ENCODE measurements at regions of chr3 and their contacts with region 1.

Region 1: GRCh38 chr3:194333212-194333980 is 17.7 kb downstream of the CPN2 start:
- DNase-seq: peak; percentile 92
- H3K4me3 Mint-ChIP-seq: peak overlapping the region; percentile 65
- H3K27ac Mint-ChIP-seq: no peak overlapping the region
- H3K4me1 Mint-ChIP-seq: peaks cover 5% of the 10 kb centered on the region
- H3K27me3 Mint-ChIP-seq: peaks cover 25% of the 10 kb centered on the region

Region 2: GRCh38 chr3:193897288-193897687 is 436.1 kb before region 1 on chr3:
- CTCF ChIA-PET with region 1: no interaction called
- POLR2A ChIA-PET with region 1: no interaction called
- intact Hi-C with region 1: no loop called
- DNase-seq: no peak
- H3K4me3 Mint-ChIP-seq: no peak overlapping the region
- H3K27ac Mint-ChIP-seq: no peak overlapping the region
- H3K4me1 Mint-ChIP-seq: no peaks in the 10 kb centered on the region
- H3K27me3 Mint-ChIP-seq: peaks cover 1% of the 10 kb centered on the region

Region 3: GRCh38 chr3:194224471-194225415 is 108.7 kb before region 1 on chr3:
- CTCF ChIA-PET with region 1: no interaction called
- POLR2A ChIA-PET with region 1: no interaction called
- intact Hi-C with region 1: no loop called
- DNase-seq: no peak
- H3K4me3 Mint-ChIP-seq: no peak overlapping the region
- H3K27ac Mint-ChIP-seq: no peak overlapping the region
- H3K4me1 Mint-ChIP-seq: peaks cover 7% of the 10 kb centered on the region
- H3K27me3 Mint-ChIP-seq: peaks cover 30% of the 10 kb centered on the region

Region 4: GRCh38 chr3:194344012-194344411 is 10.6 kb after region 1 on chr3:
- CTCF ChIA-PET with region 1: interaction called, 92 read pairs
- POLR2A ChIA-PET with region 1: no interaction called
- intact Hi-C with region 1: no loop called
- DNase-seq: peak; percentile 77
- H3K4me3 Mint-ChIP-seq: no peak overlapping the region
- H3K27ac Mint-ChIP-seq: no peak overlapping the region
- H3K4me1 Mint-ChIP-seq: peaks cover 2% of the 10 kb centered on the region
- H3K27me3 Mint-ChIP-seq: no peaks in the 10 kb centered on the region

Region 5: DNA sequence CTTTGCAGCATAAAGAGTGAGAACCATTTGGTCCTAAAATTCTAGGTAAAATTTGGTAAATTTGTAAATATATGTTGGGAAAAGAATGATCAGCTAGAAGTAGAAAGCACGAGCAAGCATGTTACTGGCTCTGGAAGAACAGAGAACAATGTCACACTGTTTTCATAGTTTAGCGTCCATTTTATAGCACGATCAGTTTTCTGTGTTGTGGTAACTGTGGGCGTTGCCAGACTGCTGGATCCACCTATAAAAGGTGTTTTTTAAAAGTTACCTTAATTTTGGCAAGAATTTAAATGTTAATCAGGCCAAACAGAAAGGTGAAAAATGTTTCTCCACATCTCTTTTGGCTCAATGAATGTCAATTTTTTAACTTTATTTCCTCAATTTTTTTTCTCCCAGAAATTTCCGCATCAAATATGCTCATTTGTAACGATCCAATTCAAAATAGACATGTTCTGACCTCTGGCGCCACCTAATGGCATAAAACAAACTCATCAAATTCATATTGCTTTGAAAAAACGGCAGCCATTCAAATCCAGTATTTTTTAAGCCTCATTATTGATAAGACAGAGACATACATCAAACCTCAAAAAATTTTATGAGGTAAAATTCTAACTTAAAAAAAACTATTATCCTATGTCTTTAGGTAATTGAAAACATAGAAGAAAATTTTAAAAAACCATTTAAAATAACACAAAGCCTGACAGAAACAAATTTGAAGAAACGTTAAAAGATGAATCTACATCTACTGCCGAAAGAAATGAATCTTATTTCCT is 71.2 kb after region 1 on chr3:
- CTCF ChIA-PET with region 1: interaction called, 106 read pairs
- POLR2A ChIA-PET with region 1: no interaction called
- intact Hi-C with region 1: loop called (anchors 1 kb)
- DNase-seq: peak; percentile 28
- H3K4me3 Mint-ChIP-seq: no peak overlapping the region
- H3K27ac Mint-ChIP-seq: no peak overlapping the region
- H3K4me1 Mint-ChIP-seq: peaks cover 12% of the 10 kb centered on the region
- H3K27me3 Mint-ChIP-seq: no peaks in the 10 kb centered on the region

Region 6: DNA sequence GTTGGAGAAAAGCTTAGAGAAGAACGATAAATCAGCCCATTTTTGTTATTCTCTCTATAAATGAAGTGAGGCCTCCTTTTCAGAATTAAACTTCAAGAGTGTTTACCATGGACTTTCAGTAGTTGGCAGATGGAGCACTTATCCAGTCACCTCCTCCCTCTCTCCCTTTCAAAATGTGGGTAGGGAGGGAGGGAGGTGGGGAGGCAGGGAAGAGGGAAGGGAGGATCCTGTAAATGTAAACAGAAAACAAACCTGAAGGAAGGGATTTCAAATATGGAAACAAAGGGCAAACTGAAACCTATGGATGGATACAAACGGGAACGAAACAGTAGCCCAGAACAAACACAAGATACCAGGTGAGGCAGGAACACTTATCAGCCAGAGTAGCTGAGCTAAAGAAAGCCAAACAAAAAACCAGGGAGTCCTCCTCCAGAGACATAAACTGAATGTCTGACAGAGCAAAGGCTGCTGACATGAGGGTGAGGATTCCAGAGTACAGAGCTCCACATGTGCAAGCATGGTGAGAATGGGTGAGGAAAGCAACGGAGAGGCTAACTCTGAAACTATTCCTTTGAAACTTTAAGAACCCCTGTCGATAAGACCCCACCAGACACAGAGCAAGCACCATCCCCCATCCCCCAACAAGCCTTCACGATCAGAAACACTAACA is 106.6 kb after region 1 on chr3:
- CTCF ChIA-PET with region 1: no interaction called
- POLR2A ChIA-PET with region 1: no interaction called
- intact Hi-C with region 1: no loop called
- DNase-seq: no peak
- H3K4me3 Mint-ChIP-seq: no peak overlapping the region
- H3K27ac Mint-ChIP-seq: no peak overlapping the region
- H3K4me1 Mint-ChIP-seq: no peaks in the 10 kb centered on the region
- H3K27me3 Mint-ChIP-seq: no peaks in the 10 kb centered on the region

Region 7: GRCh38 chr3:194632809-194633348 is 299.5 kb after region 1 on chr3:
- CTCF ChIA-PET with region 1: no interaction called
- POLR2A ChIA-PET with region 1: no interaction called
- intact Hi-C with region 1: loop called (anchors 10 kb)
- DNase-seq: peak; percentile 20
- H3K4me3 Mint-ChIP-seq: peak overlapping the region; percentile 82
- H3K27ac Mint-ChIP-seq: no peak overlapping the region
- H3K4me1 Mint-ChIP-seq: peaks cover 5% of the 10 kb centered on the region
- H3K27me3 Mint-ChIP-seq: no peaks in the 10 kb centered on the region

Region 8: DNA sequence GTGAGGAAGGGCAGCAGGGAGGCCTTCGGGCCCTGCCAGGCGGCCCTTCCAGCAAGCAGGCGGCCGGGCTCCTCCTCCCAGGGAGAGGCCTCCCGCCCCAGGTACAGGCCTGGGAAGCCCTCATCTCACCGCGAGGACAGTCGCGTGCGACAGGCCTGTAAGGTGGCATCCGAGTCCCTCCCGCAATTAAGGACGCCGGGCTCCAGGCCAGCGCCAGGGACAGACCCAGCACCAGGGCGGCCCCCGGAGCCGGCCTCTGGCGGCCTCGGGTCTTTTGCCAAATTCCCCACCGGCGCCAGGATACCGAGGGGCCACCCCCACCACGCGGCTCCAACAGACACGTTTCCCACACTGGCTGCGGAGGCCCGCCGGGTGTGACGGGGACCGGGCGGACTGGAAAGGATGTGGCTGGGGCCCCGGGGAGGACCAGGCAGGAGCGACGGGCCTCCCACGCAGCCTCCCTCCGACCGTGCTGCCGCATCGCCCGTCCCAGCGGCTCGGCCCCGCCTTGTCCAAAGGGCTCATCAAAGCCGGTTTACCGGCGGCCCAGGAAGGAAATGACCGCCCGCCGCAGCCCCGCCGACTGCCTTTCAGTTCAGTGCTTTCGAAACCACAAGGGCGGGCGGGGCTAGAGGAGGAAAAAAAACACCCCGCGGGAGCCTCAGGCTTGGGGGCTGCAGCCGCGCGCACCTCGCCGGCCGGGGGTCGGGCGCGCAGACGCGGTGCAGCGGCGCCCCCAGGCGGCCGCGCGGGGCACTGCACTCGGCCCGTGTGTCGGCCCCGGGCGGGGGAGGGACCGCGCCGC is 926.3 kb after region 1 on chr3:
- CTCF ChIA-PET with region 1: no interaction called
- POLR2A ChIA-PET with region 1: no interaction called
- intact Hi-C with region 1: loop called (anchors 10 kb)
- DNase-seq: peak; percentile 90
- H3K4me3 Mint-ChIP-seq: peak overlapping the region; percentile 57
- H3K27ac Mint-ChIP-seq: peak overlapping the region; percentile 42
- H3K4me1 Mint-ChIP-seq: peaks cover 14% of the 10 kb centered on the region
- H3K27me3 Mint-ChIP-seq: no peaks in the 10 kb centered on the region